ENCODE measurements at regions of chr16 and their contacts with region 1.

Region 1: GRCh38 chr16:2155091-2156021 is at the start of gene TRAF7:
- DNase-seq: peak; percentile 100
- H3K4me3 ChIP-seq: peak within 1 kb of the TSS; percentile 78 to 94 (median 81)
- H3K27ac ChIP-seq: peak within 1 kb of the TSS; percentile 76
- H3K4me1 ChIP-seq: peaks cover 72% of the 10 kb centered on the region
- H3K27me3 ChIP-seq: no peaks in the 10 kb centered on the region
- CTCF ChIP-seq: no peak
- total RNA-seq, gene TRAF7: 47.5 to 110 TPM

Region 2: DNA sequence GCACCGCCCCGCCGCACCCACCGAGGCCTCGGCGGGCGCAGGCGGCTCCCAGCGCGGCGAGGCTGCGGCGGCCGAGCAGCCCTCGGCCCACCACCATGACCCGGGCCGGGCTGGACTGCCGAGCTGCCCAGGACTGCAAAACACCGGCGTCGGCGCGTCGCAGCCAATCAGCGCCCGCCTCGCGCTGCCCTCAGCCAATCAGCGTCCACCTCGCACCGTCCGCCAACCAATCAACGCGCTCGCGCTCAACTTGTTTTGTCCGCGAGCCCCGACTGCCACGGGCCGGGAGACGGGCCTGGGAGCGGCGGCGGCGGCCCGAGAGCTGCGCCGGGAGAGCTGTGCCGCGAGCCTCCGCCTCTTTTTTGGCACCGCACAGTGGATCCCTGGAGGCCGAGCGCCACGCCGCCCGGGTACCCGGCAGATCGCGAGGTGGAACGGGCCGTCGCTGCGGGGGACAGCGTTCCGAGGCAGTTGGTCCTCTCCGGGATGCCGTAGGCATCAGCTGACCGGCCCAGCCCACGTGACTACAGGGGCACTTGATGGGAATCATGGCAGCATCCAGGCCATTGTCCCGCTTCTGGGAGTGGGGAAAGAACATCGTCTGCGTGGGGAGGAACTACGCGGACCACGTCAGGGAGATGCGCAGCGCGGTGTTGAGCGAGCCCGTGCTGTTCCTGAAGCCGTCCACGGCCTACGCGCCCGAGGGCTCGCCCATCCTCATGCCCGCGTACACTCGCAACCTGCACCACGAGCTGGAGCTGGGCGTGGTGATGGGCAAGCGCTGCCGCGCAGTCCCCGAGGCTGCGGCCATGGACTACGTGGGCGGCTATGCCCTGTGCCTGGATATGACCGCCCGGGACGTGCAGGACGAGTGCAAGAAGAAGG is 328.4 kb before region 1 on chr16 and contains the starts of genes FAHD1 and HAGH:
- CTCF ChIA-PET with region 1: no interaction called
- dilution Hi-C with region 1: no loop called
- in situ Hi-C with region 1: loop called in 1 of 2 experiments (anchors 25 kb)
- intact Hi-C with region 1: no loop called
- DNase-seq: peak; percentile 94
- H3K4me3 ChIP-seq: peak within 1 kb of the TSS; percentile 87 to 99 (median 97)
- H3K27ac ChIP-seq: peak within 1 kb of the TSS; percentile 61
- H3K4me1 ChIP-seq: peaks cover 22% of the 10 kb centered on the region
- H3K27me3 ChIP-seq: no peaks in the 10 kb centered on the region
- CTCF ChIP-seq: no peak
- total RNA-seq, gene FAHD1: 33.1 to 61.3 TPM
- total RNA-seq, gene HAGH: 38.7 to 43.8 TPM

Region 3: DNA sequence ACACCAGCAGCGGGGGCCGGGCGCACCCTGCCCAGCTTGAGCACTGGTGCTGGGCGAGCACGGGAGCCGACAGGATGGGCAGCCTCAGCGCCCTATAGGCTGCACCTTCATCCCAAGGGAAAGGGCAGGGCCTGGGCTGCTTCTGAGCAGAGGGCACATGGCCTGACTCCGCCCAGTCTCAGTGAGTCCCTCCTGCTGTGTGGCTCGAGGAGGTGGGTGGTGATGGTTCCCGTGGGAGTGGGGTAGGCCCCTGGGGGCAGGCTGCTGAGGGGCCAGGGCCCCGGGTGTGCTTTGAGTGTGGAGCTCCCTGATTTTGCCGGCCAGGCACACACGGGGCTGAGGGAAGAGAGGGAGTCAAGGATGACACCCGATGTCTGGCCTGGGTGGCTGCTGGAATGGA is 69.7 kb before region 1 on chr16:
- CTCF ChIA-PET with region 1: no interaction called
- dilution Hi-C with region 1: no loop called
- in situ Hi-C with region 1: no loop called
- intact Hi-C with region 1: no loop called
- DNase-seq: no peak
- H3K4me3 ChIP-seq: no peak overlapping the region
- H3K27ac ChIP-seq: no peak overlapping the region
- H3K4me1 ChIP-seq: peaks cover 32% of the 10 kb centered on the region
- H3K27me3 ChIP-seq: no peaks in the 10 kb centered on the region
- CTCF ChIP-seq: no peak

Region 4: GRCh38 chr16:2121853-2122252 is 33.5 kb before region 1 on chr16:
- CTCF ChIA-PET with region 1: no interaction called
- dilution Hi-C with region 1: no loop called
- in situ Hi-C with region 1: no loop called
- intact Hi-C with region 1: loop called (anchors 1 kb)
- DNase-seq: peak; percentile 40
- H3K4me3 ChIP-seq: peak overlapping the region in 2 of 3 experiments; percentile 10 to 34
- H3K27ac ChIP-seq: peak overlapping the region; percentile 15
- H3K4me1 ChIP-seq: peaks cover 53% of the 10 kb centered on the region
- H3K27me3 ChIP-seq: no peaks in the 10 kb centered on the region
- CTCF ChIP-seq: no peak

Measured in mammary epithelial cell (primary cell).